GM12878 (cell line): ENCODE measurements at regions of chr2 and their contacts with region 1.

Region 1: GRCh38 chr2:218806346-218806978 is 24.5 kb downstream of the CYP27A1 start:
- DNase-seq: peak; percentile 32
- ATAC-seq: peak; percentile 92
- H3K4me3 ChIP-seq: no peak overlapping the region
- H3K27ac ChIP-seq: peak overlapping the region; percentile 64; the same call in 1 of the 2 replicates
- H3K4me1 ChIP-seq: no peaks in the 10 kb centered on the region
- H3K27me3 ChIP-seq: no peaks in the 10 kb centered on the region
- CTCF ChIP-seq: no peak
- EP300 ChIP-seq: no peak
- POLR2A ChIP-seq: no peak
- RAD21 ChIP-seq: no peak

Region 2: GRCh38 chr2:219142329-219142728 is 335.9 kb after region 1 on chr2:
- CTCF ChIA-PET with region 1: no interaction called
- POLR2A ChIA-PET with region 1: interaction called, 12 read pairs
- RAD21 ChIA-PET with region 1: no interaction called
- SMC1A ChIA-PET with region 1: no interaction called
- in situ Hi-C with region 1: no loop called
- intact Hi-C with region 1: no loop called
- DNase-seq: no peak
- ATAC-seq: no peak
- H3K4me3 ChIP-seq: no peak overlapping the region
- H3K27ac ChIP-seq: no peak overlapping the region
- H3K4me1 ChIP-seq: no peaks in the 10 kb centered on the region
- H3K27me3 ChIP-seq: no peaks in the 10 kb centered on the region
- CTCF ChIP-seq: no peak
- EP300 ChIP-seq: no peak
- POLR2A ChIP-seq: no peak
- RAD21 ChIP-seq: no peak